Activated CD4-positive, alpha-beta T cell treated with anti-CD3 and anti-CD28 coated beads for 36 hours (primary cell): ENCODE measurements at regions of chr1 and their contacts with region 1.

Region 1: DNA sequence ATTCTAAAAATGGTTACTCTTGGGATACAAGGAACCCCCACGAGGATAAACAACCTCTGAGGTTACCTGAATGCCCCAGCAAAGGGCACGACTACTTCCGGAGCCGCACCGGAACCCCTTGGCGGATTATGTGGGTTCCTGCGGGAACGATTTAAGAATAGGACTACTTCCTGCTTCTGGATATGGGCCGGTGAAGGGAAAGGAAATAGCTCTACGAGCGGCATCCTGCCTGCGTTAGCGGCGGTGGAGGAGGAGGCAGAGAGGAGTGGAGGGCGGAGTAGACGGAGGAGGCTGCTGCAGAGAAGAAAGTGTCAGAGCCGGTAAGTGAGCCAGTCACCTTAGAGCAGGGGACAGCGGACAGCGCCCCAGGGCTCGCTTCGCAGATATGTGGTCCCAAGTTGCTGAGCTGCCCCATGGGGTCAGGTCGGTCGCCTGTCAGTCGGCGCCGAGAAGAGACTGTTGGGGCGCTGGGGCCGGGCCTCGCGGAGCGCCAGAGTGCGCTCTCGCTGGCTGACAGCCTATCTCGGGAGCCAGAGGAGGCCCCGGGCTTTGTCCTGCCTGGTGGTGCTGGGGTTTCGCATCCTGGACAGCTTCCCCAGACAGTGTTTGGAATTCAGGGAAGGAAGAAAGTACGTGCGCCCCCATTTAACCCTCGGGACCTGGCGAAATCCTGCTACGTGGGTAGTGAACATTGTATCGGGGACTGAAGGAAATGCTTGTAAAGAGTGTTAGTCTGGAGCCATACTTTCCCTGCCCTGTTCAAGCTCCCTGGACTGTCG is at the start of gene KLHL20:
- DNase-seq: peak; percentile 90
- ATAC-seq: peak; percentile 99
- H3K4me3 Mint-ChIP-seq: peak within 1 kb of the TSS; percentile 86
- H3K27ac Mint-ChIP-seq: peak within 1 kb of the TSS; percentile 88
- H3K4me1 Mint-ChIP-seq: peaks cover 24% of the 10 kb centered on the region
- H3K27me3 Mint-ChIP-seq: peaks cover 11% of the 10 kb centered on the region
- total RNA-seq, gene KLHL20: 11.1 to 14.1 TPM

Region 2: DNA sequence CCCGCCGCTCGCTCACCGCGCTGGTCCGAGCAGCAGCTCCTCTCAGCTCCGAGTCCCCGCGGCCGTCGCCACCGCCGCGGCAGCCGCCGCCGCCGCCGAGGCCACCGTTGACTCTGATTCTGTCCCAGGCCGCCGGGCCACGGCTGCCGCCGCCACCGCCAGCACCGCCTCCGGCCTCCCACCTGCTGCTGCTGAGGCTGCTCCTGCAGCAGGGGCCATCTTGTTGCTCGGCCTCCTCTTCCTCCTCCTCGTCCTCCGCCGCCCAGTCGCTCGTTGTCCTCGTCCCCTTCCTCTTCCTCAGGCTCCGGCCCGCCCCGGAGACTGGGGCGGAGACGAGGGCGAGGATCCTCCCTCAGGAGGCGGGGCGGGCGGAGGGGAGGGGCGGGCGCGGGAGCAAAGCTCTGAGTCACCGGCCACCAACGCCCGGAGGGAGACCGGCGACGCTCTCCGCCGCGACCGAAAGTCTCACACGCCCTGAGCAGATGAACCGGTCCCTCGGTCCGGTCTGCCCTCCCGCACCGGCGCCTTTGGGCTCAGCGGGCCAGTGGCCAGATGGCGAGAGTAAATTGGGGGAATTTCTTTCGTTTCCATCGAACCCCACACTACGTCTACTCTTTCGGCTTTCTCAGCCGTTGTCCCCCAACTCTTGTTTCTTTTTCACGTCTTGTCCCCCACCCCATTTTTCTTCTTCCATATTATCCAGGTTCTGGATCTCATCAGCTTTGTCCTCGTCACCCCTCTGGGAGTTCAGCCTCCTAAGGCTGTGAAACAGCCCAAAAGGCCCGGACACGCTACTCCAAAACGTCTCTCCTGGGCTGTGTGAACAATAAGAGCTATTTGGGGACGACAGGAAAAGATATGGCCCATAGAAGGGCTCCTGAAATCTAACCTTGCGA is 307.4 kb after region 1 on chr1 and contains the start of gene RC3H1:
- CTCF ChIA-PET with region 1: no interaction called
- POLR2A ChIA-PET with region 1: no interaction called
- intact Hi-C with region 1: loop called (anchors 1 to 10 kb)
- DNase-seq: peak; percentile 96
- ATAC-seq: peak; percentile 91
- H3K4me3 Mint-ChIP-seq: peak within 1 kb of the TSS; percentile 87
- H3K27ac Mint-ChIP-seq: peak within 1 kb of the TSS; percentile 96
- H3K4me1 Mint-ChIP-seq: peaks cover 31% of the 10 kb centered on the region
- H3K27me3 Mint-ChIP-seq: no peaks in the 10 kb centered on the region
- total RNA-seq, gene RC3H1: 27.3 to 37.0 TPM